Activated CD4-positive, alpha-beta T cell treated with anti-CD3 and anti-CD28 coated beads for 36 hours (primary cell): ENCODE measurements at regions of chr6 and their contacts with region 1.

Region 1: GRCh38 chr6:163554663-163555062 is 140.1 kb downstream of the QKI start:
- DNase-seq: peak; percentile 81
- ATAC-seq: peak; percentile 78
- H3K4me3 Mint-ChIP-seq: no peak overlapping the region
- H3K27ac Mint-ChIP-seq: no peak overlapping the region
- H3K4me1 Mint-ChIP-seq: peaks cover 7% of the 10 kb centered on the region
- H3K27me3 Mint-ChIP-seq: no peaks in the 10 kb centered on the region

Region 2: GRCh38 chr6:163180874-163181541 is 373.7 kb before region 1 on chr6:
- CTCF ChIA-PET with region 1: no interaction called
- POLR2A ChIA-PET with region 1: no interaction called
- intact Hi-C with region 1: loop called in 1 of 2 experiments (anchors 2 kb)
- DNase-seq: peak; percentile 42
- ATAC-seq: no peak
- H3K4me3 Mint-ChIP-seq: no peak overlapping the region
- H3K27ac Mint-ChIP-seq: no peak overlapping the region
- H3K4me1 Mint-ChIP-seq: no peaks in the 10 kb centered on the region
- H3K27me3 Mint-ChIP-seq: peaks cover 3% of the 10 kb centered on the region